ENCODE measurements at regions of chr3 and their contacts with region 1.

Region 1: GRCh38 chr3:13509059-13509815 is 29.1 kb downstream of the HDAC11 start:
- DNase-seq: no peak
- CTCF ChIP-seq: no peak

Region 2: DNA sequence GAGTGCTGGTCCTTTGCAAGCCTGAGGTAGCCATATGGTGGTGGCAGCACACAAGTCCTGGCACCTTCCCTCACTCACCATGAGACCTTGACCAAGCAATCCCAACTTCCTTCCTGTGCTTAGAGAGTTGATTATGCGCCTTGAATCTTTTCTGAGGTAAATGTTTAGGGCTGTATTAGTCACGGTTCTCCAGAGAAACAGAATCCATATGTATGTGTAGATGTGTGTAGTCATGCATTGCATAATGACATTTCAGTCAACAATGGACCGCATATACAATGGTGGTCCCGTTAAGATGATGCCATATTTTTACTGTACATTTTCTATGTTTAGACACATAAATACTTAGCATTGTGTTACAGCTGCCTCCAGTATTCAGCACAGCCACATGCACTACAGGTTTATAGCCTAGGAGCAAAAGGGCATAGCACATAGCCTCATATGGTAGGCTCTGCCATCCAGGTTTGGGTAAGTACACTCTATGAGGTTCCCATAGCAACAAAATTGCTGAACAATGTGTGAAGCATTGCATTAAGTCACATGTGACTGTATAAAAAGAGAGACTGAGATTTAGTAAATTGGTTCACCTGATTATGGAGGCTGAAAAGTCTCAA is 68.9 kb before region 1 on chr3:
- CTCF ChIA-PET with region 1: no interaction called
- POLR2A ChIA-PET with region 1: no interaction called
- DNase-seq: no peak
- CTCF ChIP-seq: no peak

Region 3: GRCh38 chr3:13495921-13496723 is 13.1 kb before region 1 on chr3:
- CTCF ChIA-PET with region 1: interaction called, 10 read pairs
- POLR2A ChIA-PET with region 1: no interaction called
- DNase-seq: peak; percentile 77
- CTCF ChIP-seq: peak; percentile 97

Region 4: DNA sequence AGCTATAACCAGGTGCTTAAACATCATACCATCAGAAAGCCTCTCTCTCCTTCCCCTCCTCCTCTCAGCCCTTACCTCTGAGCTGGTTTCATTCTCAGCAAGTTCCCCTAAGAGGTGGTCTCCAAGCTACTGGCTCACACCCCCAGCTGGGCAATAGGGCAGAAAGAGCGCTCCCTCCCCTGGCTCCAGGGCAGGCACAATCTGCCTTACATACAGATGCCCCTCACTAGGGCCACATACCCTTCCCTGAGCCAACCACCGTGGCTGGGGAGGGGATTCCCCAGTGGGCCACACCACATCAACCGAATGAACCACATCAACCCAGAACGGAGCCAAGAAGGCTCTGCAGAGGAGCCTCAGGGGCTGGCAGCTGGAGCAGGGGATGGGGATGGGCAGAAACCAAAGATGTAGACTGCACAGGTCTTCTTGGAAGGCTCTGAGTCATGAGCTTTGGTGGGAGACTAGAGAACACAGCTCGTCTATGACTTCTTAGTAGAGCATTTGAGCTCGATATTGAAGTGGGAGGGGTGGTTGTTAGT is 35.1 kb after region 1 on chr3:
- CTCF ChIA-PET with region 1: no interaction called
- POLR2A ChIA-PET with region 1: no interaction called
- DNase-seq: no peak
- CTCF ChIP-seq: no peak

Measured in GM10248 (cell line).